Activated T-helper 1 cell treated with anti-CD3 and anti-CD28 coated beads, Interleukin-12 subunit alpha, Interleukin-12 subunit beta, Interleukin-2, Interleukin-4 antibody, amounts not matched to agents 30 ng/mL and 10 ng/mL and 1 ng/mL, durations not matched to agents 14 hours and 24 hours and 36 hours (primary cell): ENCODE measurements at regions of chrX and their contacts with region 1.

Region 1: DNA sequence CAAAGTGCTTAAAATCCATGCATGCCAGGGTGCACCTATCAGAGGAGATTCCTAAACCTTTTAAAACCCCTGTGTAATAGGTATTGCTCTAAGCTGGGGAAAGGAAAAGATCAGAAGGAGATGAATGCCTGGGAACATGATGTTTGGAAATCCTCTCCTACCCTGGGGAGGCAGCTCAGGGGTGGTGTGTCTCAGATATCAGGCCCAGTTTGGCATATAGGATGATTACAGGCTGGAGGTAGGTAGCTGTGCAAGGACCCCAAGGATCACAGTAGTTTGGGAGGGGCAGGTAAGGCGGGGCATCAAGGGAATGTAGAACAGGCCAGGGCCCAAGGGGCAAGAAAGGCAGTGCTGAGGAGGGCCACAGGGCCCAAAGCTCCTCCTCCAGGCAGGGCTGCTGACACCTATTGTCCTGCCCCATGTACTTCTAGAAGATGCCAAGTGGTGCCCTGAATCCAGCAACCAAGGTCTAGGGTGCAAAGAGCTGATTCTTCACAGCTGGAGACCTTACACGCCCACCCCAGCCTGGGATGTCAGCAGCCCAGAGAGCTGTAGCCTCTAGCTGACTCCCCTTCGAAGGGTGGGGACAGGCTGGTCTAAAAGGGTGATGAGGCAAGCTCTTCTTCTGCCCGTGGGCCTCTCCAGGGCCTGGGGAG is 17.6 kb downstream of the SASH3 start:
- DNase-seq: no peak
- H3K4me3 Mint-ChIP-seq: no peak overlapping the region
- H3K27ac Mint-ChIP-seq: no peak overlapping the region
- H3K4me1 Mint-ChIP-seq: peaks cover 12% of the 10 kb centered on the region
- H3K27me3 Mint-ChIP-seq: no peaks in the 10 kb centered on the region

Region 2: GRCh38 chrX:129786210-129786651 is 11.1 kb before region 1 on chrX:
- intact Hi-C with region 1: loop called (anchors 1 kb)
- DNase-seq: no peak
- H3K4me3 Mint-ChIP-seq: peak overlapping the region; percentile 69
- H3K27ac Mint-ChIP-seq: peak overlapping the region; percentile 79
- H3K4me1 Mint-ChIP-seq: peaks cover 48% of the 10 kb centered on the region
- H3K27me3 Mint-ChIP-seq: no peaks in the 10 kb centered on the region